ENCODE measurements at regions of chr1 and their contacts with region 1.

Region 1: DNA sequence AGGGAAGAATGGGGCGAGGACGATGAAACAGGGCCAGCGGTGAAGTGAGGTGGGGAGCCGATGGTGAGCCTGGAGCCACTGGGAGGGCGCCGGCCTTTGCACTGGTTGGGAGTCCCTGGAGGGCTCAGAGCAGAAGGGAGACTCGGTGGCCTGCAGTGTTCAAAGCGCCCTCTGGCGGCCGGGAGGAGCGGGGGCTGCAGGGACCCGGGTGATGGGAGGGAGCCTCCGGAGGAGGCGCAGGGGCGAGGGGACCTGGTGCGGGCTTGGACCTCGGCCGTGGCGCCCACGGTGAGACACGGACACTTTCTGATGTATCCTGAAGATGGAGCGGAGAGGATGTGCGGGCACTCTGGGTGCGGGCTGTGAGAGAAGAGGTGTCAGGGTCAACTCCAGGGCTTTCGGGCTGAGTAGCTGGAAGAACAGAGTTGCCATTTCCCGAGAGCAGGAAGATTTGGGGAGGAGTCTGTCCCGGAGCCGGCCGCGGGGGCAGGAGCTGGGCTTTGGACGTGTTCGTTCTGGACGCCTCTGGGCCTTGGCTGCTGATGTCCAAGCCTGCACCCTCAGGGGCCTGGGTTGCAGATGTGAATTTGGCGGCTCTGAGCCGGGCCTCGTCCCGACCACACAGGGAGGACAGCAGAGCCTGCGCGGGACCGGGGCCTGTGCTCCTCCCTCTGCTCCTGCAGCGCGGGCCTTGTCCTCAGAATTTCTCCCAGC is 29.7 kb downstream of the HEYL start:
- DNase-seq: peak; percentile 58 to 97
- H3K4me3 ChIP-seq: peak overlapping the region; percentile 59 to 71 (median 60)
- H3K27ac ChIP-seq: no peak overlapping the region
- H3K4me1 ChIP-seq: peaks cover 0 to 5% (median 0%) of the 10 kb centered on the region in 4 experiments; a peak in 2 of 7 replicates
- H3K27me3 ChIP-seq: peaks cover 0 to 13% (median 8%) of the 10 kb centered on the region in 4 experiments; a peak in 6 of 7 replicates
- CTCF ChIP-seq: peak; percentile 90 to 97 (median 91)
- EP300 ChIP-seq: no peak
- POLR2A ChIP-seq: no peak
- RAD21 ChIP-seq: peak; percentile 46 to 62

Region 2: DNA sequence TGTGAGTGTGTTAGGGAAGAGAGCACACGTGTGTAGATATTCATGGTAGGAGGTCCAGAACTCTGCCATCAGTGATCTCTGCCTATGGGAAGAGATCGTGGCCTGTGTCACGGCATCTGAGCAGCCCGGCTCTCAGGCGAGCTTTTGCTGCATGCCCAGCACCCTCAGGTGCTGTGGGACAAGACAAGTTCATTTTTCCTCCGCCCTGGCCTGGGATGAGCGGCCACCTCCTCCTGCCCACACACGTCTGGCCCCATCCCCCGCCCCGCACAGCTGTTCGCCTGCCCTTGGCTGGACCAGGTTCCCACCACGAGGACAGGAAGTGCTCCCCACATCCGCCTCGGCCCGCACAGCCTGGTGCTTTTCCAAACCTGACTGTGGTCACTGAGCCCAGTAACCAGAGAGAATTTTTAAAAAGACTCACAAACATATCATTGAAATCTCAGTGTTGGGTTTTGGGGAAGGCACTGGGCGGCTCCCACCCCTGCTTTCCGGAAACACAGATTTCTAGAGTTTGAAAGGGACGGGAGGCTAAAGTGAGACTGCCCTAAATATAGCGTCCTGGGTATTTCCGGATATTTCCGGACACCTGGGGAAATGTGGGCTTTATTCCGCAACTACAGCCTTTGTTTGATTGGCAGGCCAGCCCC is 100.3 kb before region 1 on chr1:
- CTCF ChIA-PET with region 1: no interaction called
- POLR2A ChIA-PET with region 1: no interaction called
- DNase-seq: no peak
- H3K4me3 ChIP-seq: no peak overlapping the region
- H3K27ac ChIP-seq: no peak overlapping the region
- H3K4me1 ChIP-seq: no peaks in the 10 kb centered on the region; a peak in 1 of 7 replicates
- H3K27me3 ChIP-seq: peaks cover under 1 to 3% (median 2%) of the 10 kb centered on the region in 4 experiments; a peak in 5 of 7 replicates
- CTCF ChIP-seq: no peak
- EP300 ChIP-seq: no peak
- POLR2A ChIP-seq: no peak
- RAD21 ChIP-seq: no peak

Region 3: GRCh38 chr1:39592069-39592468 is 17.7 kb before region 1 on chr1:
- CTCF ChIA-PET with region 1: interaction called, 18 read pairs
- POLR2A ChIA-PET with region 1: no interaction called
- DNase-seq: no peak
- H3K4me3 ChIP-seq: no peak overlapping the region
- H3K27ac ChIP-seq: no peak overlapping the region
- H3K4me1 ChIP-seq: no peaks in the 10 kb centered on the region; a peak in 1 of 7 replicates
- H3K27me3 ChIP-seq: peaks cover 0 to 8% (median 4%) of the 10 kb centered on the region in 4 experiments; a peak in 4 of 7 replicates
- CTCF ChIP-seq: no peak
- EP300 ChIP-seq: no peak
- POLR2A ChIP-seq: no peak
- RAD21 ChIP-seq: no peak

Region 4: GRCh38 chr1:39639305-39640130 is 29.7 kb after region 1 on chr1 and contains the start of gene HEYL:
- CTCF ChIA-PET with region 1: interaction called, 337 read pairs
- POLR2A ChIA-PET with region 1: interaction called, 3 read pairs
- DNase-seq: peak; percentile 44 to 94
- H3K4me3 ChIP-seq: peak within 1 kb of the TSS; percentile 43 to 76 (median 54)
- H3K27ac ChIP-seq: no peak within 1 kb of the TSS
- H3K4me1 ChIP-seq: peaks cover 0 to 5% (median 0%) of the 10 kb centered on the region in 4 experiments; a peak in 1 of 7 replicates
- H3K27me3 ChIP-seq: peaks cover 4 to 48% (median 38%) of the 10 kb centered on the region in 4 experiments
- CTCF ChIP-seq: peak; percentile 70 to 97 (median 74)
- EP300 ChIP-seq: no peak
- POLR2A ChIP-seq: no peak
- RAD21 ChIP-seq: peak; percentile 36 to 63; a peak in 3 of 4 replicates
- total RNA-seq, gene HEYL: 3.1 and 3.5 TPM in 2 replicates

Region 5: GRCh38 chr1:39711104-39711965 is 101.6 kb after region 1 on chr1:
- CTCF ChIA-PET with region 1: interaction called, 15 read pairs
- POLR2A ChIA-PET with region 1: interaction called, 4 read pairs
- DNase-seq: no peak
- H3K4me3 ChIP-seq: no peak overlapping the region
- H3K27ac ChIP-seq: no peak overlapping the region
- H3K4me1 ChIP-seq: peaks cover 3 to 15% (median 4%) of the 10 kb centered on the region in 4 experiments; a peak in 5 of 7 replicates
- H3K27me3 ChIP-seq: peaks cover 88 to 100% (median 96%) of the 10 kb centered on the region in 4 experiments
- CTCF ChIP-seq: peak in 1 of 3 experiments; percentile 8; a peak in 1 of 4 replicates
- EP300 ChIP-seq: no peak
- POLR2A ChIP-seq: no peak
- RAD21 ChIP-seq: no peak

Region 6: GRCh38 chr1:39799770-39800470 is 190.1 kb after region 1 on chr1:
- CTCF ChIA-PET with region 1: interaction called, 11 read pairs
- POLR2A ChIA-PET with region 1: no interaction called
- DNase-seq: peak in 1 of 2 experiments; percentile 98
- H3K4me3 ChIP-seq: no peak overlapping the region
- H3K27ac ChIP-seq: no peak overlapping the region
- H3K4me1 ChIP-seq: peaks cover 0 to 3% (median 0%) of the 10 kb centered on the region in 4 experiments; a peak in 2 of 7 replicates
- H3K27me3 ChIP-seq: no peaks in the 10 kb centered on the region; a peak in 1 of 7 replicates
- CTCF ChIP-seq: peak; percentile 73 to 85 (median 78)
- EP300 ChIP-seq: no peak
- POLR2A ChIP-seq: no peak
- RAD21 ChIP-seq: peak; percentile 65 to 69